Caco-2 (cell line): ENCODE measurements at regions of chr11 and their contacts with region 1.

Region 1: DNA sequence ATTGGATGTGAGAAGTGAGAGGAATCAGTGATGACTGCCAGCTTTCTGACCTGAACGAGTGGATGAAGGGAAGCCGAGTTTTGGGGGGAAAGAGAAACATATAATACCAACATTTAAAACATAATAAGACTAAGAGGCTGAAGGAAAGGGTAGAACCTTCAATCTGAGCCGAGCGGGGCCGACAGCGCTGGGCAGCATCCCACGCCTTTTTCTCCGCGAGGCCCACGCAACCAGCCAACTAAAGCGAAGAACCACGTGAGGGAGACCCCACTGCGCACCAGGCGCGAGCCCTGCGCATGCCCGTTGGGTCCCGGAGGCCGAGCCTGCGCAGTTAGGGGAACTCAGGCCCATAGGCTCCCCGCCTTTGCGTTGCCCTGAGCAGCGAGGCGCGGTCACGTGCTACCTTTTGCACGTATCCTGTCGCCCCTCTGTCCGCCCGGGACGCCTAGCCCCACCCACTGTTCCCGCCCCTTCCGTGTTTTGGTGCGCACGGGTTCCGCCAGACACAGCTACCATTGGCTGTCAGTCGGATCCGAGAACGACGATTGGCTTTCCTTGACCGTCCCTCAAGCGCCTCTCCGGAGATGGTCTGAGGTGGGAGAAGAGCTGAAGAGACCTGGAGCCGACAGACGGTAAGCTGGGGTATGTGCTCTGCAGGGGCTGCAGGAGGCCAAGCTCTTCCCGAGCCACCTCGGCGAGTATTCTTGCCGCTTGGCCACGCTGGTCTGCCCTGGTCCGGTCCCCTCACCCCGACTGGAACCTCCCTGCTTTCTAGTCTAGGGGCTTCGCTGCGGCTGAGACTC is at the start of gene HINFP:
- DNase-seq: peak; percentile 100
- H3K4me3 ChIP-seq: peak within 1 kb of the TSS; percentile 84
- H3K4me3 Mint-ChIP-seq: peak within 1 kb of the TSS; percentile 88
- H3K27ac Mint-ChIP-seq: peak within 1 kb of the TSS; percentile 90
- H3K4me1 ChIP-seq: peaks cover 18% of the 10 kb centered on the region
- H3K4me1 Mint-ChIP-seq: peaks cover 18% of the 10 kb centered on the region
- H3K27me3 ChIP-seq: no peaks in the 10 kb centered on the region
- H3K27me3 Mint-ChIP-seq: no peaks in the 10 kb centered on the region
- CTCF ChIP-seq: no peak
- total RNA-seq, gene HINFP: 61.6 and 65.2 TPM in 2 replicates

Region 2: DNA sequence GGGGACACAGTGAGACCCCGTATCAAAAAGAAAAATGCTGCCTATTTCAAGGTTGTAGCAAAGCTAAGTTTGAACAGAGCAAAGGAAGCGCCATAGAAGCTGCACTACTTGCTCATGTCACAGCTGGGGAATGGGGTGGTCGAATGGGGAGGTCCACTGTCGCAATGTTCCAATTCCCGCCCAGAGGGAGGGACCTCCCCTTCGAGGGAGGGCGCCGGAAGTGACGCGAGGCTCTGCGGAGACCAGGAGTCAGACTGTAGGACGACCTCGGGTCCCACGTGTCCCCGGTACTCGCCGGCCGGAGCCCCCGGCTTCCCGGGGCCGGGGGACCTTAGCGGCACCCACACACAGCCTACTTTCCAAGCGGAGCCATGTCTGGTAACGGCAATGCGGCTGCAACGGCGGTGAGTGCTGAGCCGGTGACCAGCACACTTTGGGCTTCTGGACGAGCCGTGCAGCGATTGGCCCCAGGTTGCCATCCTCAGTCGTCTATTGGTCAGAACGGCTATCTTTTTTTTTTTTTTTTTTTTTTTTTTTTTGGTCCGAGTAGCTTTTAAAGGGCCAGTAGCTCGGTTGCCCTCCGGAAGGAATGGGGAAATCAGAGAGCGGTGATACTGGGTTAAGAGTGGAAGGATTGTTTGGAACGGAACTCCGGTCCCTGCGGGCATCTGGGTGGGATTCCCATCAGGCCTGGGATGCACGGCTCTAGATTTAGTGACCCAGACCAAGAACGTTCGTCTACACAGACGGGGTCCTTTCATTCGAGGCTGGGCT is 36.4 kb before region 1 on chr11 and contains the start of gene HMBS:
- CTCF ChIA-PET with region 1: interaction called, 4 read pairs
- POLR2A ChIA-PET with region 1: interaction called, 30 read pairs
- intact Hi-C with region 1: no loop called
- DNase-seq: peak; percentile 97 to 98
- H3K4me3 ChIP-seq: peak within 1 kb of the TSS; percentile 85
- H3K4me3 Mint-ChIP-seq: peak within 1 kb of the TSS; percentile 97
- H3K27ac Mint-ChIP-seq: peak within 1 kb of the TSS; percentile 98
- H3K4me1 ChIP-seq: peaks cover 11% of the 10 kb centered on the region
- H3K4me1 Mint-ChIP-seq: peaks cover 1% of the 10 kb centered on the region
- H3K27me3 ChIP-seq: no peaks in the 10 kb centered on the region
- H3K27me3 Mint-ChIP-seq: no peaks in the 10 kb centered on the region
- CTCF ChIP-seq: no peak
- total RNA-seq, gene HMBS: 94.9 and 95.7 TPM in 2 replicates

Region 3: DNA sequence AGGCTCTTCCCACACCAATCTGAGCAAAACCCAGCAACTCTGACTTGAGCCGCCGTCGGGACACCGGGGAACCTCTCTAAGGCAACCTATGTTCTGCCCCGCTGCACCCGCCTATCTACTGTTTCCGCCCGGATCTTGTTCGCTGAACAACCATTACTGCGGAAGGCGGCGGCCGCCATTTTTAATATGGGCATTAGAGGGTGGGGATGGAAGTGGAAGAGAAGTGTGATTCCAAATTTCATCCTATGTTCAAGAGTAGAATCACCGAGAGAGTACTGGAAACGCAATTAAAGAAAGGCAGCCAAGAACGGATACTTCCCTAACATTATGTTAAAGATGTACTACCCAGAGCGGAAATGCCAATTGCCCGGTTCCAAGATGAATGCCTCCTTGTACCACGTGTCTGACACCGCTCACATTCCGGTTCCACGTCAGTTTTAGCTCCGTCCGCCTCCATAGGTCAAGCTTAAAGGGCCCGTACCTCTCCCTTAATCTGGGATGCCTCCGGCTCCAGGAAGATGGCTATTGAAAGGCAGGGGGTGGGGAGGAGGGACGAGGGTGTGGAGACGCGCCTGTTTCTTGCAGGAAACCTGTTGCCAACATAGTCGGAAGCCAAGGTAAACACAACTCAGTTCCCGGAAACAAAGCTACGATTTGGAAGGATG is 19.3 kb before region 1 on chr11 and contains the start of gene DPAGT1:
- CTCF ChIA-PET with region 1: interaction called, 16 read pairs
- POLR2A ChIA-PET with region 1: interaction called, 71 read pairs
- intact Hi-C with region 1: loop called (anchors 1 kb)
- DNase-seq: peak; percentile 97 to 99
- H3K4me3 ChIP-seq: peak within 1 kb of the TSS; percentile 43
- H3K4me3 Mint-ChIP-seq: peak within 1 kb of the TSS; percentile 85
- H3K27ac Mint-ChIP-seq: peak within 1 kb of the TSS; percentile 98
- H3K4me1 ChIP-seq: peaks cover 24% of the 10 kb centered on the region
- H3K4me1 Mint-ChIP-seq: peaks cover 29% of the 10 kb centered on the region
- H3K27me3 ChIP-seq: no peaks in the 10 kb centered on the region
- H3K27me3 Mint-ChIP-seq: no peaks in the 10 kb centered on the region
- CTCF ChIP-seq: peak in 1 of 2 experiments; percentile 8
- total RNA-seq, gene DPAGT1: 117 and 119 TPM in 2 replicates

Region 4: GRCh38 chr11:119108146-119108856 is 12.9 kb before region 1 on chr11:
- CTCF ChIA-PET with region 1: interaction called, 10 read pairs
- POLR2A ChIA-PET with region 1: interaction called, 71 read pairs
- intact Hi-C with region 1: loop called (anchors 1 kb)
- DNase-seq: peak; percentile 77 to 79
- H3K4me3 ChIP-seq: peak overlapping the region; percentile 85
- H3K4me3 Mint-ChIP-seq: peak overlapping the region; percentile 79
- H3K27ac Mint-ChIP-seq: peak overlapping the region; percentile 27
- H3K4me1 ChIP-seq: peaks cover 24% of the 10 kb centered on the region
- H3K4me1 Mint-ChIP-seq: peaks cover 25% of the 10 kb centered on the region
- H3K27me3 ChIP-seq: no peaks in the 10 kb centered on the region
- H3K27me3 Mint-ChIP-seq: no peaks in the 10 kb centered on the region
- CTCF ChIP-seq: no peak

Region 5: GRCh38 chr11:119168471-119169281 is 47.5 kb after region 1 on chr11 and contains the start of gene NLRX1:
- CTCF ChIA-PET with region 1: no interaction called
- POLR2A ChIA-PET with region 1: interaction called, 24 read pairs
- intact Hi-C with region 1: no loop called
- DNase-seq: peak; percentile 74 to 80
- H3K4me3 ChIP-seq: peak within 1 kb of the TSS; percentile 51
- H3K4me3 Mint-ChIP-seq: peak within 1 kb of the TSS; percentile 66
- H3K27ac Mint-ChIP-seq: no peak within 1 kb of the TSS
- H3K4me1 ChIP-seq: peaks cover 4% of the 10 kb centered on the region; the same call in 1 of the 2 replicates
- H3K4me1 Mint-ChIP-seq: no peaks in the 10 kb centered on the region
- H3K27me3 ChIP-seq: no peaks in the 10 kb centered on the region
- H3K27me3 Mint-ChIP-seq: no peaks in the 10 kb centered on the region
- CTCF ChIP-seq: peak; percentile 45 to 74
- total RNA-seq, gene NLRX1: 7.2 and 8.0 TPM in 2 replicates

Region 6: DNA sequence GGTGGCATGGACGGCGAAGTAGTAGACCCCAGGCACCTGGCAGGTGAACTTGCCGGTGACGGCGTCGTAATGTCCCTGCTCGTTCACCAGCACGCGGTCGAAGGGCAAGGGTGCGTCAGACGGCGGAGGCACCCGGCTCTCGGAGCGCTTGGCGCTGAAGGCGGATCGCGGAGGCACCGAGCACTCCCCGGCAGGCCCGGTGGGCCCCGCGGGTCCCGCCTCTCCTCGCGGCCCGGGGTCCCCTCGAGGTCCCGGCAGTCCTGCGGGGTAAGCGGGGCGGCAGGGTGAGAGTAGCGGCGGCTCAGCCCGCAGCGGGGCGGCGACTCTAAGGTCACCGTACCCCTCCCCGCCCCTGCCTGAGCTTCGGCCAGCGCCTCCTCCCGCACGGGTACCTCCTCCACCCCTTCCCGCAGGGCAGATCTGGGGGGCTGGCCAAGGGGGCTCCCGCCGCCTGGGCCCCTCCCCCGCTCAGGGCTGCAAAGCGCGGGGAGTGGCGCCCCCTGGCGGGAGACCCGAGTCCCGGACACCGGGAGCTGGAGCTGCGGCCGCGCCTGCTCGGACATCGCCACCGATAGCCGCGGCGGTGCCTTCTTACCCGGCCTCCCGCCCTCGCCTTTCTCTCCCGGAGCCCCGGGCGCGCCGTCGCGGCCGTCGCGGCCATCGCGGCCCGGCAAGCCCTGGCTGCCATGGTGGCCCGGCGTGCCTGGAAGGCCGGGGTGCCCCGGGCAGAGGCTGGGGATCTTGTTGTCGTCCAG is 218.6 kb after region 1 on chr11:
- CTCF ChIA-PET with region 1: interaction called, 19 read pairs
- POLR2A ChIA-PET with region 1: no interaction called
- intact Hi-C with region 1: no loop called
- DNase-seq: peak in 1 of 2 experiments; percentile 89
- H3K4me3 ChIP-seq: peak overlapping the region; percentile 45
- H3K4me3 Mint-ChIP-seq: peak overlapping the region; percentile 69
- H3K27ac Mint-ChIP-seq: no peak overlapping the region
- H3K4me1 ChIP-seq: peaks cover 37% of the 10 kb centered on the region
- H3K4me1 Mint-ChIP-seq: peaks cover 29% of the 10 kb centered on the region
- H3K27me3 ChIP-seq: no peaks in the 10 kb centered on the region; the same call in 1 of the 2 replicates
- H3K27me3 Mint-ChIP-seq: peaks cover 3% of the 10 kb centered on the region
- CTCF ChIP-seq: peak; percentile 93 to 99